ENCODE measurements at regions of chr15 and their contacts with region 1.

Region 1: GRCh38 chr15:34708422-34708821 is 46.4 kb downstream of the GJD2 start:
- DNase-seq: no peak
- ATAC-seq: peak in 7 of 8 donors; percentile 54 to 84 (median 79)
- H3K4me3 ChIP-seq: peak overlapping the region in 1 of 10 donors; percentile 3
- H3K27ac ChIP-seq: no peak overlapping the region
- H3K4me1 ChIP-seq: peaks cover 0 to 3% (median 0%) of the 10 kb centered on the region in 9 donors
- H3K27me3 ChIP-seq: no peaks in the 10 kb centered on the region
- CTCF ChIP-seq: peak; percentile 46 to 81 (median 67)

Region 2: DNA sequence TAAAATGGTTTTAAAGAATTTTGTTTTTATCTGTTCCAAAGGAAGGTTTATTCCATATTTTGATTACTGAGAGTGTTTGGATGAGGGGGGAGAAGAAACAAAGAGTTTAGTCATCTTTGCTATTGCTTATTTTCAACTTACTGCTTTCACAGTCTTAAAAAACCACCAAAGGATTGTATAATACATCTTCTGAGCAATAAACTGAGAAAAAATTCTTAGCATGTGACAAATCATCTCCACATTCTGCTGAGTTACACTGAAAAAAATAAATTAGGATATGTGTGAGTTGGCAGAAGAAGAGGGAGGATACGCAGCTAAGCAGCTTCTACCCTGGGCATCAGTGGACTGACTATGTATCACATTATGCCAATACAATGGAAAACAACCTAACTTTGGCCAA is 110.1 kb after region 1 on chr15:
- intact Hi-C with region 1: loop called in 2 of 10 experiments (anchors 10 kb)
- DNase-seq: no peak
- ATAC-seq: no peak
- H3K4me3 ChIP-seq: no peak overlapping the region
- H3K27ac ChIP-seq: no peak overlapping the region
- H3K4me1 ChIP-seq: peaks cover 0 to 4% (median 0%) of the 10 kb centered on the region in 9 donors
- H3K27me3 ChIP-seq: no peaks in the 10 kb centered on the region
- CTCF ChIP-seq: no peak

Region 3: DNA sequence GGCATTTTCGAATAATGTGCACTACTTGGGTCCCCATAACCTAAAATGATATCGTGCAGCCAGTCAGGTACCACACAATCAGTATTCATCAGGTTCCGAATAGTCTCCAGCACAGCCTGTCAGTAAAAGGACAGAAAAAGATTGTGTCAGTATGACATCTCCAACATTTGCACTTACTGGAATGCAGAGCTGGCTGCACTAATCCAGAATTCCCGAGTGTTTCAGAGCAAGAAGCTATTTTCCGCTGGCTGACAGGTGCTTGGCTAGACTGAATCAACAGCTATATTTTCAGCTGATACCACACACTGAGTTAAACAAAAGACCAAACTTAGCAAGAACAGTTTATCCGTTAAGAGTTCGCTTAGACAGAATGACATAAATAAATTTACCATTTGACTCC is 192.3 kb after region 1 on chr15:
- intact Hi-C with region 1: loop called in 3 of 10 experiments (anchors 5 to 10 kb)
- DNase-seq: peak in 1 of 2 donors; percentile 19
- ATAC-seq: peak; percentile 34 to 93 (median 80)
- H3K4me3 ChIP-seq: no peak overlapping the region
- H3K27ac ChIP-seq: peak overlapping the region in 8 of 10 donors; percentile 22 to 71 (median 53)
- H3K4me1 ChIP-seq: peaks cover 0 to 7% (median 0%) of the 10 kb centered on the region in 9 donors
- H3K27me3 ChIP-seq: no peaks in the 10 kb centered on the region
- CTCF ChIP-seq: no peak

Region 4: GRCh38 chr15:34914317-34914716 is 205.9 kb after region 1 on chr15:
- intact Hi-C with region 1: loop called in 5 of 10 experiments (anchors 5 to 10 kb)
- DNase-seq: no peak
- ATAC-seq: no peak
- H3K4me3 ChIP-seq: no peak overlapping the region
- H3K27ac ChIP-seq: no peak overlapping the region
- H3K4me1 ChIP-seq: no peaks in the 10 kb centered on the region
- H3K27me3 ChIP-seq: no peaks in the 10 kb centered on the region
- CTCF ChIP-seq: no peak

Region 5: DNA sequence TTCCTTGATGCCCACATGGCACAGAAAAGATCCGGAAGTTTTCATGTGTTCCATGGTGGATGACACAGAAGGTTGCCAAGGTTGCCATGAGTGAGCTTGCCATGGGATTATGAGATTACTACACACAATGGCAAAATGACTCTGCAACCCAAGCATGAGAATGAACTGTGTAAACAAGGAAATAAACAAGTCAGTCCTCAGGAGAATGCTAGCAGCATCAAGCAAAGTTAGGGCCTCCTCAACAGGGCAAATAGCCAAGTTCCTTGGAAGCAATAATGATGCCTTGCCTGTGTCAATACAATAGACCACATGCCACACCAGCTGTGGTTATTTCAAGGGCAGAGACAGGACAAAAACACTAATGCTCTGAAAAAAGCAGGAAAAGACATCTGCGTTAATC is 219.3 kb after region 1 on chr15:
- intact Hi-C with region 1: loop called in 3 of 10 experiments (anchors 5 to 10 kb)
- DNase-seq: no peak
- ATAC-seq: no peak
- H3K4me3 ChIP-seq: no peak overlapping the region
- H3K27ac ChIP-seq: no peak overlapping the region
- H3K4me1 ChIP-seq: peaks cover 0 to 6% (median 0%) of the 10 kb centered on the region in 9 donors
- H3K27me3 ChIP-seq: no peaks in the 10 kb centered on the region
- CTCF ChIP-seq: no peak

Measured in heart right ventricle (tissue), 16 donors.